ENCODE measurements at regions of chrX and their contacts with region 1.

Region 1: DNA sequence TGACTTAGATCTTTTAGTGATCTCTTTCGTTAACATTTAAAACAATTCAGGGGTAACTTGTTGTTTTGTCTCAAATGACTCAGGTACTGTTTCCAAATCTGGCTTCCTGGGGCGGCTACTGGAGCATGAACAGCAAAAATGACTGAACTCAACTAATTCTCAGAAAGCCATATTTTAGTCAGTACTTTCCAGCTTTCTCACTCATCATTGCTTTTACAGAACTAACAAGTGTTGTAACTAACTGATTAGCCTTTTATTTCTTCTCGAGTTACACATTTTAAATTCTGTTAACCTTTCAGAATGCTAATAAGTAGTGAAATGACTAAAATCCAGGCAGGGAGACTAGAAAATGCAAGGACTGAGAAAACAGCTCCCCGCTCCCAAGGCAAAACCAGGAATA is 55.3 kb downstream of the JADE3 start:
- DNase-seq: no peak
- H3K4me3 ChIP-seq: no peak overlapping the region
- H3K27ac ChIP-seq: no peak overlapping the region
- H3K4me1 ChIP-seq: no peaks in the 10 kb centered on the region
- H3K27me3 ChIP-seq: no peaks in the 10 kb centered on the region
- CTCF ChIP-seq: no peak
- POLR2A ChIP-seq: no peak

Region 2: GRCh38 chrX:46912098-46912602 is 55.4 kb before region 1 on chrX and contains the start of gene JADE3:
- intact Hi-C with region 1: loop called (anchors 10 kb)
- DNase-seq: peak; percentile 66
- H3K4me3 ChIP-seq: peak within 1 kb of the TSS; percentile 51 to 58
- H3K27ac ChIP-seq: peak within 1 kb of the TSS; percentile 64
- H3K4me1 ChIP-seq: no peaks in the 10 kb centered on the region
- H3K27me3 ChIP-seq: no peaks in the 10 kb centered on the region
- CTCF ChIP-seq: no peak
- POLR2A ChIP-seq: peak; percentile 56
- total RNA-seq, gene JADE3: 6.8 to 17.2 TPM

Region 3: DNA sequence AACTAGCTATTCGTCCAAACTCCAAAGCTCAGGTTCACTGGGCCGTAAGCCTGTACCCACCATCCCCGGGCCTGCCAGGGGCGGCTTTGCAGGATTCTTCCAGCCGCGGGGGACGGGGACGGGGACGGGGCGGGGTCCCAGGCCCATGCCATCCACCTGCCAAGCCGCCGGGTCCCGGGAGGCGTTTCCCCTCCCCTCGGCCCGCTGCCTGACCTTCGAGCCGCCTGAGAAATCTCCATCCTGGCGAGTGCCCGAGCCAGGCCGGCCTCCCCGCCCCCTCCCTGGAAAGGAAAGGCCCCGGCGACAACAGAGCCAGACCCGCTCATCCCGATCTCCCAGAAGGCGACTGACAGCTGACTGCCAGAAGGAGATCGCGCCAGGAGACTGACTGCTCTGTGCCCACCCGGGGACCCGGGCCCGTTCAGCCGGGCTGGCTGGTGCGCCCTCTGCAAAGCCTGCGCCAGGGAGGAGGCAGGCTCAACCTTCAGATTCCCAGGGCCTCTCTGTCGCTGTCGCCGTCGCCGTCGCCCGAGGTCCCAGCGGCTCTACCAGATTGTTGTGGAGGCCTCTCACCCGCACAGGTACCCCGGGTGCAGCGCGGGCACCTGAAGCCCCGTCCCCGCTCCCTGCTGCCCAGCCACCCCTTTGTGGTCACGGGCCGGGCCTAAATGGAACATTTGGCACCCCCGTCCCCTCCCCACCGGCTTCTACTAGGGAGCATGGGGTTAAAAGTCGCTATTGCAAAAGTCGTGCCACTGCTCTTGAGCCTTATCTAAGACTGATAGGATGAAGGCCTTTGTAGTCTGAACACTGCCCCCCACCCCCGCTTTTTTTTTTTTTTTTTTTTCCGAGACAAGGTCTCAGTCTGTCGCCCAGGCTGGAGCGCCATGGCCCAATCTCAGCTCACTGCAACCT is 110.8 kb after region 1 on chrX and contains the start of gene RGN:
- intact Hi-C with region 1: no loop called
- DNase-seq: peak; percentile 6
- H3K4me3 ChIP-seq: peak within 1 kb of the TSS; percentile 21 to 23
- H3K27ac ChIP-seq: peak within 1 kb of the TSS; percentile 38 to 62
- H3K4me1 ChIP-seq: no peaks in the 10 kb centered on the region
- H3K27me3 ChIP-seq: no peaks in the 10 kb centered on the region
- CTCF ChIP-seq: no peak
- POLR2A ChIP-seq: no peak
- total RNA-seq, gene RGN: 3.6 to 10.5 TPM